ENCODE measurements at regions of chr2 and their contacts with region 1.

Region 1: GRCh38 chr2:181457121-181457740 is at the start of gene ITGA4:
- DNase-seq: peak; percentile 80 to 86 (median 83)
- H3K4me3 ChIP-seq: peak within 1 kb of the TSS; percentile 25 to 91
- H3K4me3 Mint-ChIP-seq: peak within 1 kb of the TSS; percentile 93 to 99 (median 96)
- H3K27ac ChIP-seq: peak within 1 kb of the TSS; percentile 86
- H3K27ac Mint-ChIP-seq: peak within 1 kb of the TSS; percentile 87 to 98 (median 96)
- H3K4me1 ChIP-seq: peaks cover 30% of the 10 kb centered on the region
- H3K4me1 Mint-ChIP-seq: peaks cover 30 to 73% (median 43%) of the 10 kb centered on the region in 4 donors
- H3K27me3 ChIP-seq: no peaks in the 10 kb centered on the region
- H3K27me3 Mint-ChIP-seq: no peaks in the 10 kb centered on the region
- total RNA-seq, gene ITGA4: 278 to 297 TPM

Region 2: DNA sequence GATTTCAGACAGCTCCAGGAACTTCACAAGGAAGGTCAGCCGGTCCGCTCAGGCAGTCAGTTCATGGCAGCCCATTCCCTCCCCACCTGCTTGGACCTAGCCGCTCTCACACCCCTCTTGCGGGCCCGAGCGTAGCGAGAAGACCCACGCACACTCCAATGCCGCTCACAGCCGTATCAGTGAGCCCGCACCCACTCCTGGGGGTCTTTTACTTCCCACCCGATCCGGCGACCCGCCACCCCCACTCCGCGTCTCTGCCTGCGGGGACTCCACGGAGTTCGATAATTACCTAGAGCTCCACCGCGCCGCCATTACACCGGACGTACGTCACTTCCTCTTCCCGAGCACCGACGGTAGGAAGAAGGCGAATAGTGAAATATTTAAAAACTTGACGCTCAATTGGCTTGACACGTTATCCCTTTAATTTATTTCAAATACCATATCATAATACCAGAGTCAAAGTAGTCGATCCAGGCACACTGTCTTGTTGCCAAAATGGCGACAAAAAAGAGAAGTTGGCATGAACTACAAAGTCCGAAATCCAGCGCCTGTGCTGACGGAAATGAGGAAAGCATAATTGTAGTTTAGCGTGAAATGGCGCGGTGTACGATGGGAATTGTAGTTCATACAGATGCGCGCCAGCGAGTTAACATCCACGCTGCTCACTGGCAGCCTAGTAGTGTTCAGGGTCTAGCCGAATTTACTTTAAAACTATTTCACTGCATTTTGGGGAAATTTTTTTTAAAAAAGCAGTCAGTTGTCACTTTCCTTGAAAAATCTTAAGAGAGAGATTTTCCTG is 1450.3 kb before region 1 on chr2 and contains the start of gene CWC22:
- CTCF ChIA-PET with region 1: no interaction called
- POLR2A ChIA-PET with region 1: no interaction called
- intact Hi-C with region 1: loop called (anchors 2 kb)
- DNase-seq: peak; percentile 90 to 92 (median 91)
- H3K4me3 ChIP-seq: peak within 1 kb of the TSS; percentile 76 to 89
- H3K4me3 Mint-ChIP-seq: peak within 1 kb of the TSS; percentile 92 to 98 (median 94)
- H3K27ac ChIP-seq: peak within 1 kb of the TSS; percentile 96
- H3K27ac Mint-ChIP-seq: peak within 1 kb of the TSS; percentile 98 to 100 (median 100)
- H3K4me1 ChIP-seq: peaks cover 15% of the 10 kb centered on the region
- H3K4me1 Mint-ChIP-seq: peaks cover 22 to 48% (median 37%) of the 10 kb centered on the region in 4 donors
- H3K27me3 ChIP-seq: no peaks in the 10 kb centered on the region
- H3K27me3 Mint-ChIP-seq: no peaks in the 10 kb centered on the region
- total RNA-seq, gene CWC22: 28.9 to 31.1 TPM

Region 3: DNA sequence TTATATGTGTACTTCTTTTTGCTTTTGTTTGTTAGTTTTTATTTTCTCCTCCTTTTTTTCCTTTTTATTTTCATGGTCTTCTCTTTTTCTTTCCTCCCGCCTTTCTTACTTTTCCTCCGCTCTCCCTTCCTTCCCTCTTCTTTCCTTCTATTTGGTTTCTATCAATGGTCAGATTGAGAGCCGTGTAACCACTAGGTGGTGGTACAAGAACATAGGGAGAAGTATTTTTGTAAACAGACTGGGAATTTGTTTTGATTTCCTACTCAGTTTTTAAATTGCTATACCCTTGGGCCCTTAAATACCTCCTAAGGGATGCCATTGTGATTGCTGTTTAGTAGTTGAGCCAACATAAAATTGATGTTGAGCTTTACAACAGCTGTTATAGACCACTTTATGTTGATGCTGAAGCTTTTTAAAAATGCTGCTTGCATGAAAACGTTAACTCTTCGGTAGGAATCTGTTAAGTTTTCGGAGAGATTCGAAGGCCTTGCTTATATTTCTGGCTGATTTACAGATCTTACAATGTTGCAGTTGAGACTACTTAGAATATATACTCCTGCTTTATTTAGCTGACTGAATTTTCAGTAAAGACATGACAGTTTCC is 352.6 kb before region 1 on chr2:
- CTCF ChIA-PET with region 1: interaction called, 83 read pairs
- POLR2A ChIA-PET with region 1: interaction called, 87 read pairs
- intact Hi-C with region 1: loop called (anchors 1 kb)
- DNase-seq: peak in 4 of 5 donors; percentile 48 to 57 (median 52)
- H3K4me3 ChIP-seq: no peak overlapping the region
- H3K4me3 Mint-ChIP-seq: peak overlapping the region in 4 of 8 donors; percentile 0 to 43 (median 6)
- H3K27ac ChIP-seq: no peak overlapping the region
- H3K27ac Mint-ChIP-seq: peak overlapping the region; percentile 1 to 58 (median 8)
- H3K4me1 ChIP-seq: peaks cover 54% of the 10 kb centered on the region
- H3K4me1 Mint-ChIP-seq: peaks cover 29 to 49% (median 35%) of the 10 kb centered on the region in 4 donors
- H3K27me3 ChIP-seq: no peaks in the 10 kb centered on the region
- H3K27me3 Mint-ChIP-seq: no peaks in the 10 kb centered on the region

Region 4: GRCh38 chr2:181165199-181165868 is 291.9 kb before region 1 on chr2:
- CTCF ChIA-PET with region 1: interaction called, 3 read pairs
- POLR2A ChIA-PET with region 1: interaction called, 21 read pairs
- intact Hi-C with region 1: no loop called
- DNase-seq: peak in 3 of 5 donors; percentile 53 to 57 (median 57)
- H3K4me3 ChIP-seq: peak overlapping the region in 1 of 2 donors; percentile 42
- H3K4me3 Mint-ChIP-seq: peak overlapping the region in 7 of 8 donors; percentile 45 to 83 (median 78)
- H3K27ac ChIP-seq: peak overlapping the region; percentile 53
- H3K27ac Mint-ChIP-seq: peak overlapping the region; percentile 88 to 98 (median 95)
- H3K4me1 ChIP-seq: peaks cover 50% of the 10 kb centered on the region
- H3K4me1 Mint-ChIP-seq: peaks cover 33 to 66% (median 50%) of the 10 kb centered on the region in 4 donors
- H3K27me3 ChIP-seq: no peaks in the 10 kb centered on the region
- H3K27me3 Mint-ChIP-seq: no peaks in the 10 kb centered on the region

Region 5: GRCh38 chr2:181275643-181276070 is 181.6 kb before region 1 on chr2:
- CTCF ChIA-PET with region 1: interaction called, 7 read pairs
- POLR2A ChIA-PET with region 1: interaction called, 18 read pairs
- intact Hi-C with region 1: loop called (anchors 2 kb)
- DNase-seq: peak; percentile 17 to 45 (median 43)
- H3K4me3 ChIP-seq: no peak overlapping the region
- H3K4me3 Mint-ChIP-seq: peak overlapping the region in 6 of 8 donors; percentile 12 to 69 (median 40)
- H3K27ac ChIP-seq: peak overlapping the region; percentile 31
- H3K27ac Mint-ChIP-seq: peak overlapping the region; percentile 57 to 92 (median 78)
- H3K4me1 ChIP-seq: peaks cover 40% of the 10 kb centered on the region
- H3K4me1 Mint-ChIP-seq: peaks cover 26 to 54% (median 37%) of the 10 kb centered on the region in 4 donors
- H3K27me3 ChIP-seq: no peaks in the 10 kb centered on the region
- H3K27me3 Mint-ChIP-seq: no peaks in the 10 kb centered on the region

Region 6: GRCh38 chr2:181319286-181319685 is 137.9 kb before region 1 on chr2:
- CTCF ChIA-PET with region 1: interaction called, 27 read pairs
- POLR2A ChIA-PET with region 1: interaction called, 374 read pairs
- intact Hi-C with region 1: no loop called
- DNase-seq: no peak
- H3K4me3 ChIP-seq: no peak overlapping the region
- H3K4me3 Mint-ChIP-seq: no peak overlapping the region
- H3K27ac ChIP-seq: no peak overlapping the region
- H3K27ac Mint-ChIP-seq: no peak overlapping the region
- H3K4me1 ChIP-seq: peaks cover 11% of the 10 kb centered on the region
- H3K4me1 Mint-ChIP-seq: peaks cover 3 to 17% (median 4%) of the 10 kb centered on the region in 4 donors
- H3K27me3 ChIP-seq: no peaks in the 10 kb centered on the region
- H3K27me3 Mint-ChIP-seq: no peaks in the 10 kb centered on the region

Region 7: DNA sequence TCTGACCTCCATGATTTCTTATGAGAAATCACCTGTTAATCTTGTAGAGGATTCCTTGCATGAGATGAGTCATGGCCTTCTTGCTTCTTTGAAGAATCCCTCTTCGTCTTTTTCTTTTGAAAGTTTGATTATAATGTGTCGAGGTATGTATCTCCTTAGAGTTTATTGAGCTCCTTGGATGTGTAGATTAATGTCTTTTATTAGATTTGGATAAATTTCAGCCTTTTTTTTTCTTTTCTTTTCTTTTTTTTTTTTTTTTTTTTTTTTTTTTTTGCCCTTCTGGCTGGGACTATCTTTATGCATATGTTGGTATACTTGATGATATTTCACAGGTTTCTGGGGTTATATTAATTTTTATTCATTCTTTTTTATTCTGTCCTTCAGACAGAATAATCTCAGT is 72.3 kb before region 1 on chr2:
- CTCF ChIA-PET with region 1: no interaction called
- POLR2A ChIA-PET with region 1: no interaction called
- intact Hi-C with region 1: no loop called
- DNase-seq: no peak
- H3K4me3 ChIP-seq: no peak overlapping the region
- H3K4me3 Mint-ChIP-seq: no peak overlapping the region
- H3K27ac ChIP-seq: no peak overlapping the region
- H3K27ac Mint-ChIP-seq: no peak overlapping the region
- H3K4me1 ChIP-seq: no peaks in the 10 kb centered on the region
- H3K4me1 Mint-ChIP-seq: no peaks in the 10 kb centered on the region
- H3K27me3 ChIP-seq: no peaks in the 10 kb centered on the region
- H3K27me3 Mint-ChIP-seq: no peaks in the 10 kb centered on the region

Region 8: DNA sequence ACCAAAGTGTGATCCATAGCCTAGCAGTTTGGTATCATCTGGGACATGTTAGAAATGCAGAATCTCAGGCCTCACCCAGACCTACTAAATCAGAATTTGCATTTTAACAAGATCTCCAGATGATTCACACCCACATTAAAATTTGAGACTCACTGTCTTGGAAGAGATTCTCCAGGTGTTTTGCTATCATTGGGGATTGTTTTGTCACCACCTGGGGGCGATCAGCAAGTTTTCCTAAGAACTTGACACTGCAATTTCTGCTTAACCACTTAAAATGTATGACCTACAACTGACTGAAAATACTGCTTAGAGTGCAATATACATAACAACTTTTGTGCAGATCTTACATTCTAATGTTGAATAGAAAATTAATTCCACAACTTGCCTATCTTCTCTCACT is 19.0 kb before region 1 on chr2:
- CTCF ChIA-PET with region 1: interaction called, 44 read pairs
- POLR2A ChIA-PET with region 1: interaction called, 28 read pairs
- intact Hi-C with region 1: loop called (anchors 1 kb)
- DNase-seq: peak in 1 of 5 donors; percentile 34
- H3K4me3 ChIP-seq: no peak overlapping the region
- H3K4me3 Mint-ChIP-seq: no peak overlapping the region
- H3K27ac ChIP-seq: no peak overlapping the region
- H3K27ac Mint-ChIP-seq: no peak overlapping the region
- H3K4me1 ChIP-seq: peaks cover 10% of the 10 kb centered on the region
- H3K4me1 Mint-ChIP-seq: peaks cover 6 to 14% (median 11%) of the 10 kb centered on the region in 4 donors
- H3K27me3 ChIP-seq: no peaks in the 10 kb centered on the region
- H3K27me3 Mint-ChIP-seq: no peaks in the 10 kb centered on the region

Region 9: DNA sequence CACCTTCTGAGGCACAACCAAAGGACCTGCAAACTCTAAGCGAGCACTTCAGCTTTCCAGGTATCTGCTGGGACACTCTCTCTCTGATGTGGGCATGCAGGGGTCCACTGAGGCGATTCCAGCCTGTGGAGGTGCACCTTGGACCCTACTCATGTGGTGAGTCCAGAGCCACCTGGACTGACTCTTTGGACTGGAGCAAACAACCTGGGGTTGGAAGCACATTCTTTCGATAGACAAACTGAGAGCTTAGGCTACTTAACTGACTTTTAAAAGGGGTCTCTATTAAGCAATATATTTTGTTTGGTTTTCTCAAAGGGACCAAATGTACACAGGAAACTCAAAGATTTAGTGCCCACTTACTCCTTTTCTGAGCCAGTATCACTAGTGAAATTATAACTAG is 1357.6 kb after region 1 on chr2:
- CTCF ChIA-PET with region 1: no interaction called
- POLR2A ChIA-PET with region 1: no interaction called
- intact Hi-C with region 1: no loop called
- DNase-seq: no peak
- H3K4me3 ChIP-seq: no peak overlapping the region
- H3K4me3 Mint-ChIP-seq: no peak overlapping the region
- H3K27ac ChIP-seq: no peak overlapping the region
- H3K27ac Mint-ChIP-seq: no peak overlapping the region
- H3K4me1 ChIP-seq: no peaks in the 10 kb centered on the region
- H3K4me1 Mint-ChIP-seq: no peaks in the 10 kb centered on the region
- H3K27me3 ChIP-seq: no peaks in the 10 kb centered on the region
- H3K27me3 Mint-ChIP-seq: peaks cover 3 to 4% of the 10 kb centered on the region in 2 donors

Measured in CD4-positive, alpha-beta memory T cell (primary cell).